ENCODE measurements at regions of chr19 and their contacts with region 1.

Region 1: GRCh38 chr19:35247526-35248306 is 1.1 kb upstream of the LSR start:
- DNase-seq: peak; percentile 91 to 96
- H3K4me3 ChIP-seq: peak overlapping the region; percentile 89
- H3K27ac ChIP-seq: peak overlapping the region; percentile 95
- H3K4me1 ChIP-seq: peaks cover 27% of the 10 kb centered on the region
- H3K27me3 ChIP-seq: no peaks in the 10 kb centered on the region
- CTCF ChIP-seq: peak; percentile 59

Region 2: GRCh38 chr19:35006342-35007018 is 241.2 kb before region 1 on chr19:
- CTCF ChIA-PET with region 1: no interaction called
- POLR2A ChIA-PET with region 1: no interaction called
- intact Hi-C with region 1: loop called (anchors 1 kb)
- DNase-seq: peak; percentile 87 to 99
- H3K4me3 ChIP-seq: peak overlapping the region; percentile 24; the same call in 1 of the 2 replicates
- H3K27ac ChIP-seq: peak overlapping the region; percentile 69
- H3K4me1 ChIP-seq: peaks cover 44% of the 10 kb centered on the region
- H3K27me3 ChIP-seq: no peaks in the 10 kb centered on the region
- CTCF ChIP-seq: no peak

Region 3: GRCh38 chr19:35114353-35115176 is 133.2 kb before region 1 on chr19:
- CTCF ChIA-PET with region 1: no interaction called
- POLR2A ChIA-PET with region 1: interaction called, 3 read pairs
- intact Hi-C with region 1: loop called (anchors 1 kb)
- DNase-seq: peak; percentile 59 to 81
- H3K4me3 ChIP-seq: peak overlapping the region; percentile 89
- H3K27ac ChIP-seq: peak overlapping the region; percentile 71
- H3K4me1 ChIP-seq: peaks cover 51% of the 10 kb centered on the region
- H3K27me3 ChIP-seq: no peaks in the 10 kb centered on the region
- CTCF ChIP-seq: peak; percentile 100

Region 4: DNA sequence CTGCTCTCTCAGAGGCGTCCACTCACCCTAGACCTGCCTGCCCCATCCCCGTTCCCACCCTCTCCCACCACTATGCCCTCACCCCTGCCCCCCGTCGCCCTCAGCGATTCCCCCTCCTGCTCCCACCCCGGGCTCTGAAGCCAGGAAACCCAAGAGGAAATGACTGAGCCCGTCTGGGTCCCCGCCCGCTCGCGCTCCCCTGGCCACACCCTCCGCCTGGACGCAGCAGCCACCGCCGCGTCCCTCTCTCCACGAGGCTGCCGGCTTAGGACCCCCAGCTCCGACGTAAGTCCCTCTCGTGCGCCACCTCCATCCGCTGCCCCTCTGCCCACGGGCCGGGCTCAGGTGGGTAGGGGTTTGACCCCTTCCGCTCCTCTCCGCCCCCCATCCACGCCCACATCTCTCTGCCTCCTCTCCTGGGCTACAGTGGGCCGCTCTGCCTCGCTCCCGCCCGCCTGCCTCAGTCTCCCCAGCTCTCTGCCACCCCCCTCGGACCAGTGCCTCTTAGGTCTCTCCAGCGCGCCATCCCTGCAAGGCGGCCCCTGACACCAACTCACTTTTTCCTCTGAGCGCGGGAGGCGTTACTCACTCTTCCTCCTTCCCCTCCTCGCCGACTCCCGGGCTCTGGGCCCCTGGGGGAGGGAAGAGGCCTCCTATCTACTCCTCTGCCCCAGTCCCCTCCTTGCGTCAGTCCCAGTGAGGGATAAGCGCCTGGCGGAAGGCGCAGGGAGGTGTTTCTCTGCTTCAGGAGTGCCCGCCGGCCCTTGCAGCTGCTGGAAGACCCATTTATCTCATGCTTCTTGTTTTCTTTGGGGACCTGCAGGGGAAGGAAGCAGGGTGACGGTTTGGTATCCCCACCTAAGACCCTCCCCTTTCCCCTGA is 93.0 kb before region 1 on chr19 and contains the start of gene FXYD5:
- CTCF ChIA-PET with region 1: no interaction called
- POLR2A ChIA-PET with region 1: no interaction called
- intact Hi-C with region 1: loop called (anchors 1 kb)
- DNase-seq: peak; percentile 63 to 65
- H3K4me3 ChIP-seq: peak within 1 kb of the TSS; percentile 71
- H3K27ac ChIP-seq: peak within 1 kb of the TSS; percentile 66
- H3K4me1 ChIP-seq: peaks cover 32% of the 10 kb centered on the region
- H3K27me3 ChIP-seq: no peaks in the 10 kb centered on the region
- CTCF ChIP-seq: no peak
- total RNA-seq, gene FXYD5: 137 and 181 TPM in 2 replicates

Region 5: DNA sequence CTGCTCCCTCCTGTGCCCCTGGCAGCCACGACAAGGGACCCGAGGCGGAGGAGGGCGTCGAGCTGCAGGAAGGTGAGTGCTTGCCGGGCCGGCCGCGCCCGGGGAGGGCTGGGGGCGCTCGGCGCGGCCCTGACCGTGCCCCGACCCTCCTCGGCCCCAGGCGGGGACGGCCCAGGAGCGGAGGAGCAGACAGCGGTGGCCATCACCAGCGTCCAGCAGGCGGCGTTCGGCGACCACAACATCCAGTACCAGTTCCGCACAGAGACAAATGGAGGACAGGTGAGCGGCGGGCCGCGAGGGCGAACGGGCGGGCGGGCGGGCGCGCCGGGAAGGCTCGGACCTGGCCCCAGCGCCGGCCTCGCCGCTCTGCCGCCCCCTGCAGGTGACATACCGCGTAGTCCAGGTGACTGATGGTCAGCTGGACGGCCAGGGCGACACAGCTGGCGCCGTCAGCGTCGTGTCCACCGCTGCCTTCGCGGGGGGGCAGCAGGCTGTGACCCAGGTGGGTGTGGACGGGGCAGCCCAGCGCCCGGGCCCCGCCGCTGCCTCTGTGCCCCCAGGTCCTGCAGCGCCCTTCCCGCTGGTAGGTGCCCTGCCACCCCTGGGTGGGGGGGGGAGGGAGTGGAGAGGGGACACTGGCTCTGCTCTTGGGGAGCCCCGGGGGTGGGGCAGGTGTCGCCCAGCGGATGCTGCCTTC is 21.9 kb after region 1 on chr19:
- CTCF ChIA-PET with region 1: no interaction called
- POLR2A ChIA-PET with region 1: no interaction called
- intact Hi-C with region 1: loop called (anchors 2 kb)
- DNase-seq: peak; percentile 68 to 93
- H3K4me3 ChIP-seq: peak overlapping the region; percentile 66
- H3K27ac ChIP-seq: peak overlapping the region; percentile 47; the same call in 1 of the 2 replicates
- H3K4me1 ChIP-seq: peaks cover 14% of the 10 kb centered on the region; the same call in 1 of the 2 replicates
- H3K27me3 ChIP-seq: no peaks in the 10 kb centered on the region
- CTCF ChIP-seq: peak; percentile 70